ENCODE measurements at regions of chr14 and their contacts with region 1.

Region 1: GRCh38 chr14:55085060-55085660 is 33.7 kb downstream of the MAPK1IP1L start:
- DNase-seq: peak in 2 of 4 donors; percentile 32 to 34
- ATAC-seq: peak; percentile 78
- H3K4me3 ChIP-seq: no peak overlapping the region
- H3K27ac ChIP-seq: no peak overlapping the region
- H3K4me1 ChIP-seq: peaks cover 15% of the 10 kb centered on the region
- H3K27me3 ChIP-seq: no peaks in the 10 kb centered on the region
- CTCF ChIP-seq: no peak
- POLR2A ChIP-seq: no peak

Region 2: DNA sequence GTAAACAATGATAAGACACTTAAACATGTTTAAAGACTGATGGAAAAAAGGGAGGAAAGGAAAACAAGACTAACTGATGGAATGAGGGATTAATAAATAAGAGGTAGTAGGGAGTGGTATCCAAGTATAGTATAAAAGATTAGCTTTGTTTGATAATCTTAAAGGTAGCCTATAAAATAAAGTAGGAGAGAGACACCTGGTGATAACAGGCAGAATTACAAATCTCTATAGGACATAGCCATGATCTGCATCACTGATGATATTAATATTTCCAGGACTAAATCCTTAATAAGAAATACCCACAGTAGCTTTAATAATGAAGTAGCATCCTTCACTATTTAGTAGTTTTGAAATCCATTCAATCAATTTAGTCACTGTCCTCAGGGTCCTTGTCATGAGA is 75.8 kb after region 1 on chr14:
- intact Hi-C with region 1: loop called (anchors 5 kb)
- DNase-seq: no peak
- ATAC-seq: peak; percentile 68
- H3K4me3 ChIP-seq: no peak overlapping the region
- H3K27ac ChIP-seq: no peak overlapping the region
- H3K4me1 ChIP-seq: no peaks in the 10 kb centered on the region
- H3K27me3 ChIP-seq: no peaks in the 10 kb centered on the region
- CTCF ChIP-seq: peak; percentile 40 to 82 (median 74)
- POLR2A ChIP-seq: no peak

Region 3: GRCh38 chr14:55715889-55716288 is 630.7 kb after region 1 on chr14:
- intact Hi-C with region 1: no loop called
- DNase-seq: peak in 3 of 4 donors; percentile 18 to 52 (median 31)
- ATAC-seq: peak; percentile 75
- H3K4me3 ChIP-seq: no peak overlapping the region
- H3K27ac ChIP-seq: no peak overlapping the region
- H3K4me1 ChIP-seq: no peaks in the 10 kb centered on the region
- H3K27me3 ChIP-seq: no peaks in the 10 kb centered on the region
- CTCF ChIP-seq: no peak
- POLR2A ChIP-seq: no peak

Measured in body of pancreas (tissue), 4 donors.